Activated T-helper 1 cell treated with anti-CD3 and anti-CD28 coated beads, Interleukin-12 subunit alpha, Interleukin-12 subunit beta, Interleukin-2, Interleukin-4 antibody, amounts not matched to agents 30 ng/mL and 10 ng/mL and 1 ng/mL, durations not matched to agents 14 hours and 24 hours and 36 hours (primary cell): ENCODE measurements at regions of chr7 and their contacts with region 1.

Region 1: GRCh38 chr7:37826825-37827224 is 21.6 kb upstream of the NME8 start:
- DNase-seq: no peak
- H3K4me3 Mint-ChIP-seq: no peak overlapping the region
- H3K27ac Mint-ChIP-seq: no peak overlapping the region
- H3K4me1 Mint-ChIP-seq: peaks cover 18% of the 10 kb centered on the region
- H3K27me3 Mint-ChIP-seq: peaks cover 12% of the 10 kb centered on the region

Region 2: GRCh38 chr7:37728757-37729156 is 98.1 kb before region 1 on chr7:
- intact Hi-C with region 1: loop called (anchors 5 kb)
- DNase-seq: no peak
- H3K4me3 Mint-ChIP-seq: no peak overlapping the region
- H3K27ac Mint-ChIP-seq: no peak overlapping the region
- H3K4me1 Mint-ChIP-seq: peaks cover 5% of the 10 kb centered on the region
- H3K27me3 Mint-ChIP-seq: peaks cover 7% of the 10 kb centered on the region